ENCODE measurements at regions of chr3 and their contacts with region 1.

Region 1: GRCh38 chr3:18559331-18559842 is 134.2 kb upstream of the SATB1 start:
- DNase-seq: peak; percentile 9
- ATAC-seq: peak; percentile 73
- H3K4me3 ChIP-seq: no peak overlapping the region
- H3K27ac ChIP-seq: no peak overlapping the region
- H3K4me1 ChIP-seq: no peaks in the 10 kb centered on the region
- H3K27me3 ChIP-seq: no peaks in the 10 kb centered on the region
- CTCF ChIP-seq: peak; percentile 62
- EP300 ChIP-seq: no peak
- POLR2A ChIP-seq: no peak
- RAD21 ChIP-seq: no peak

Region 2: DNA sequence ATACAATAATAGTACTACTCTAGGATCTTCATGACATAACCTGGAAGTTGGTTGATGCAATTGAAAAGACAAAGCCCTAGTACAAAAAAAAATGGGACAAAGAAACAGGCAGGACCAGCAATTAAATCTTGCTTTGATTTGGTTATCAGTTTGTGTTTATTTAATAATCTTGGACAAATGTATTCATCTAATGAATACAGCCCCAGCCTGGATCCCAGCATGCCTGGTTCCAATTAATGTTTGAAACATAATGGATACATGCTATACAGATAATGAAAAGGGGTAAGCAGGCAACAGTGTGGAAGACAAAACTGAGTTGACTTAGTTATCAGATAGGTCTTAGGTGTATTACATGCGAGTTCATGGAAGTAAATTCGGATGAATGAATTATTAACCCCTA is 104.6 kb before region 1 on chr3:
- CTCF ChIA-PET with region 1: no interaction called
- POLR2A ChIA-PET with region 1: no interaction called
- in situ Hi-C with region 1: no loop called
- intact Hi-C with region 1: no loop called
- DNase-seq: no peak
- ATAC-seq: no peak
- H3K4me3 ChIP-seq: no peak overlapping the region
- H3K27ac ChIP-seq: no peak overlapping the region
- H3K4me1 ChIP-seq: no peaks in the 10 kb centered on the region
- H3K27me3 ChIP-seq: no peaks in the 10 kb centered on the region
- CTCF ChIP-seq: no peak
- EP300 ChIP-seq: no peak
- POLR2A ChIP-seq: no peak
- RAD21 ChIP-seq: no peak

Region 3: DNA sequence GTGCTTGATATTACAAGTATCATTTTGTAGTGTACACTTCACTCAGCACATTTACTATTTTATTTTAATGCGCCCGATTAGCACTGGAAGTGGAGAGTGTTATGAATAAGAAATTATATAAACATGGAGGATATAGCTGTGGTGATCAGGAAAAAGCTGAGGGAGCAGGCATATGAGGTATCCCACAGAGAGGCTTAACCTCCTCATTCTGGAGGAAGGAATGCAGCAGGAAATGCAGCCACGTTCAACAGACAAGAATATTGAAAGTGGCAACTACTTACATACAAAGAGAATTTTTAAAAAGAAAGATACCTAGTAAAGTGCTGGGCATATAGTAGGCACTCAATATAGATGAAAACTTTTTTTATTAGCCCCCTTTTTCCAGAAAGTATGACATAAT is 31.7 kb after region 1 on chr3:
- CTCF ChIA-PET with region 1: no interaction called
- POLR2A ChIA-PET with region 1: no interaction called
- in situ Hi-C with region 1: no loop called
- intact Hi-C with region 1: no loop called
- DNase-seq: no peak
- ATAC-seq: no peak
- H3K4me3 ChIP-seq: no peak overlapping the region
- H3K27ac ChIP-seq: no peak overlapping the region
- H3K4me1 ChIP-seq: no peaks in the 10 kb centered on the region
- H3K27me3 ChIP-seq: no peaks in the 10 kb centered on the region
- CTCF ChIP-seq: no peak
- EP300 ChIP-seq: no peak
- POLR2A ChIP-seq: no peak
- RAD21 ChIP-seq: no peak

Region 4: DNA sequence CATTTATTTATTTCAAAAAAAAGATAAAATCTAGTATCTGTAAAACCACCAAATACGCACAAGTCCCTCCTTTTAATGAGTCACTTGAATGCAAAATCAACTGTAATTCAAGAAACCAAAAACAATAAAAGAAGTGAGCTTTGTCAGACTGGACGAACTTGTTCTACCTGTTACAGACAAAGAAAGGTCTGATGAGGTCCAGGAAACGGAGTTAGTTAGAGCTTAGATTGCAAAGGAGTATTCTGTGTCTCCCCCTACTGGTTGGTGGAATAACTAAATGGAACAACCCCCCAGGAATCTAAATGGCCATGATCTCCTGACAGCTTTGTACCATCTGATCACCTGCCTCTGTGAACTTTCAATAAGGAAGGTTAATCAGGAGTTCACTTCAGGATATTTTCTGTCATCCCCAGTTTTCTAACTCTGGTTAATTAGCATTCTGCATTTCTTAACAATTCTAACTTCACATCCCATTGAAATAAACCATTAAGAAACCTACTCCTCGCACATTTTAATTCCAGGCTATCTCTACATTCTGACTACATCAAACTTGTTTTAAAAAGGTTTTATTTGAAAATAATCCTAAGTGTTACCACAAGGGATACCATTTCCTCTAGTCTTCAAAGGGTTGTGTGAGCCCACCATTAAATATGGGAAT is 198.8 kb after region 1 on chr3:
- CTCF ChIA-PET with region 1: interaction called, 6 read pairs
- POLR2A ChIA-PET with region 1: no interaction called
- in situ Hi-C with region 1: no loop called
- intact Hi-C with region 1: loop called (anchors 1 kb)
- DNase-seq: peak; percentile 47
- ATAC-seq: peak; percentile 79
- H3K4me3 ChIP-seq: no peak overlapping the region
- H3K27ac ChIP-seq: no peak overlapping the region
- H3K4me1 ChIP-seq: no peaks in the 10 kb centered on the region
- H3K27me3 ChIP-seq: no peaks in the 10 kb centered on the region
- CTCF ChIP-seq: peak; percentile 62
- EP300 ChIP-seq: no peak
- POLR2A ChIP-seq: no peak
- RAD21 ChIP-seq: no peak

Region 5: DNA sequence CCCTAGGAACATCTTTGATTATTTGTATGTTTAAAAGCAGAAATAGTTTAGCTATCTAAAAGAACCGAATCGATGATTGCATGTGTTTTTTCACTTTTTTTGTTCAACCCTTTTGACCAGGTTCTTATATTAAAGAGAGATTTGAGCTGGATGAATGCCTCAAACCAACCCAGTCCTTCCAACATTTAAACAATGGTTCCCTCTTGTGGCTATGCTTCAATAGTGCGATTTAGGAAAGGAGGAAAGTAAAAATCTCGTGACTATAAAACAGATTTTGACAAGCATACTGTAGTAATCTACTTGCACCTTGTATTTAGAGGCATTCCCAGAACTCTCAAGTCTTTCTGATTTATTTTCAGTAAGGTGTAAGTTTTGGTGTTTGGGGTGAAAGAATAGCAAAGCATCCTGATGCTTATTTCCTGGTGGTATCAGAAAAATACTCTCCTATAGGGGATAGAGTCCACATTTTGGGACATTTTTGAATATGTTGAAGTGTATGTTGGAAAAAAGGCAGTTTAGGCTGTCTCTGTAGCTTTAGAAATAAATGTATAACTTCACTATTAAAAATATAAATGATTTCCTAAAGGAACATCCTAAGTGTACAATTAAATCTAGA is 429.3 kb after region 1 on chr3:
- CTCF ChIA-PET with region 1: interaction called, 8 read pairs
- POLR2A ChIA-PET with region 1: no interaction called
- in situ Hi-C with region 1: loop called (anchors 25 kb)
- intact Hi-C with region 1: no loop called
- DNase-seq: peak; percentile 12
- ATAC-seq: peak; percentile 44; the same call in 1 of the 3 replicates
- H3K4me3 ChIP-seq: no peak overlapping the region
- H3K27ac ChIP-seq: no peak overlapping the region
- H3K4me1 ChIP-seq: no peaks in the 10 kb centered on the region
- H3K27me3 ChIP-seq: no peaks in the 10 kb centered on the region
- CTCF ChIP-seq: peak; percentile 49
- EP300 ChIP-seq: no peak
- POLR2A ChIP-seq: no peak
- RAD21 ChIP-seq: no peak

Measured in HepG2 (cell line).